Right ventricle myocardium inferior (tissue), 1 donor: ENCODE measurements at regions of chr3 and their contacts with region 1.

Region 1: GRCh38 chr3:69560818-69561217 is 174.9 kb upstream of the FRMD4B start:
- DNase-seq: no peak
- ATAC-seq: no peak

Region 2: DNA sequence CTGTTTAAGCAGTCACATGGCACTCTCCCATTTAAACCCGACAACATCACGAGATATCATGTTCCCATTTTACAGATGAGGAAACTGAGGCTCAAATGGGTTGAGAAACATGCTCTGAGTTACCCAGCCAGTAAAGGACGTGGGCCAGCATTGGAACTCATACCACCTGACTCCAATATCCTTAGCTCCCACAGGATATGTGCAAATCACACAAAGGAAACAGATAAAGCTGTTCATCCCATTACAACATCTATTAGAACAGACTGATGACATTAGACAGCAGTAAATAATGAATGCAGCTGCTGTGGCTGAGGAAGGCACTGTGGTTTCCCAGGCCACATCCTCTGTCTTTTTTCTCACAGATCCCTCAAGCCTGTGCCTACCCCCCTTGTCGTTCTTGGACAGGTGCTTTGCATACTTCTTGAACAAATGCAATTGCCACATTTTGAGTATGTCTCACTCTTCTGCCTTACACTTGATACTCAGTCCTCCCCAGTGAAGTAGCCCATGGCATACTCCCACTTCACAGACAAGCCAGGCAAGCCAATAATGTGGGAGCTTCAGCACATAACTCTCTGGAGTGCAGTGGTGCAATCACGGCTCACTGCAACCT is 192.6 kb before region 1 on chr3:
- intact Hi-C with region 1: no loop called
- DNase-seq: no peak
- ATAC-seq: peak; percentile 22

Region 3: GRCh38 chr3:69451594-69451993 is 109.2 kb before region 1 on chr3:
- intact Hi-C with region 1: no loop called
- DNase-seq: no peak
- ATAC-seq: peak; percentile 47

Region 4: DNA sequence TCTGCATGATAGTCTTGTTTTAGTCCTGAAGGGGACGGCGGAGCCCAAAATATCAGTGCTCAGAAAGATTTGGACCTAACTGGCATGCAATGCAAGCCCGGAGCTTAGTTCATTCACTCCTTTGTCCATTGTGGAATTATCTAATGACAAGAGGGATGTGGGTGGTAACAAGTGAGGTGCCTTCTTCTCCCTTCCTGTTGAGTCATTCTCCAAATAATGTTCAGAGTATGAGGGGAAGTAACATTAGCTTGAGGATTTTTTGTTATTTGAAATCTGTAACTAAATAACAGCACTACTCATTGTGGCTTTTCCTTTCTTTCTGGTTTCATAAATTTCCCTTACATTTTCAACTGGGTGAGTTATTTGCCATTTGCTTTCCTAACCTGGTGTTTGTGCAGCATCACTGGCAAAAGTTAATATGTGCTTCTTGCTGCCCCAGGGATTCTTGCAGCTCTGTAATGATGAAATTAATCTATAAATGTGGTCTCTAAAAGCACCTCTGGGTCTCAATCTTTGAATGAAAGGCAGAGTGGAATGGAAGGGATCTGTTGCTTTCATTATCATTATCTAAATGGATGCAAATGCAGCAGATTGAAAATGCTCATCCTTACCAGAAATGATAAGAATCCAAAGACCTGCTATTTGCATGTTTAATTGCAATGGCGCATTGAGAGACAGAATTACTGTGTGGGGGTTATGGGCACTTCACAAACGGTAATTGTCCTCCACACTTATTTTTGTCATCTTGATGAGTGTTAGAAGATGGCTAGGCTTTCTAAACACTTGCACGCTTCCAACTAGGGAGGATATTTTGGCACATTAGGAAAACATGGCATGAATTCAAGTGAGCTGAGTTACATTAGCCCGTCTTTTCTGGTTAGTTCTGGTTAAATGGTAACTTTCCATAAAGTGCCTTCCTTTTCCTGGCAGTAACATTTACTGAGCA is 88.6 kb after region 1 on chr3:
- intact Hi-C with region 1: loop called (anchors 5 kb)
- DNase-seq: no peak
- ATAC-seq: peak; percentile 84